ENCODE measurements at regions of chr1 and their contacts with region 1.

Region 1: GRCh38 chr1:156500797-156501499 is 373 bp upstream of the MEF2D start:
- DNase-seq: peak; percentile 90 to 97 (median 94)
- ATAC-seq: peak; percentile 63
- H3K4me3 ChIP-seq: peak overlapping the region; percentile 98
- H3K4me3 Mint-ChIP-seq: peak overlapping the region; percentile 97
- H3K27ac ChIP-seq: peak overlapping the region; percentile 96
- H3K27ac Mint-ChIP-seq: peak overlapping the region; percentile 97
- H3K4me1 ChIP-seq: peaks cover 84% of the 10 kb centered on the region
- H3K4me1 Mint-ChIP-seq: peaks cover 82% of the 10 kb centered on the region
- H3K27me3 ChIP-seq: no peaks in the 10 kb centered on the region
- H3K27me3 Mint-ChIP-seq: no peaks in the 10 kb centered on the region
- CTCF ChIP-seq: peak; percentile 74

Region 2: DNA sequence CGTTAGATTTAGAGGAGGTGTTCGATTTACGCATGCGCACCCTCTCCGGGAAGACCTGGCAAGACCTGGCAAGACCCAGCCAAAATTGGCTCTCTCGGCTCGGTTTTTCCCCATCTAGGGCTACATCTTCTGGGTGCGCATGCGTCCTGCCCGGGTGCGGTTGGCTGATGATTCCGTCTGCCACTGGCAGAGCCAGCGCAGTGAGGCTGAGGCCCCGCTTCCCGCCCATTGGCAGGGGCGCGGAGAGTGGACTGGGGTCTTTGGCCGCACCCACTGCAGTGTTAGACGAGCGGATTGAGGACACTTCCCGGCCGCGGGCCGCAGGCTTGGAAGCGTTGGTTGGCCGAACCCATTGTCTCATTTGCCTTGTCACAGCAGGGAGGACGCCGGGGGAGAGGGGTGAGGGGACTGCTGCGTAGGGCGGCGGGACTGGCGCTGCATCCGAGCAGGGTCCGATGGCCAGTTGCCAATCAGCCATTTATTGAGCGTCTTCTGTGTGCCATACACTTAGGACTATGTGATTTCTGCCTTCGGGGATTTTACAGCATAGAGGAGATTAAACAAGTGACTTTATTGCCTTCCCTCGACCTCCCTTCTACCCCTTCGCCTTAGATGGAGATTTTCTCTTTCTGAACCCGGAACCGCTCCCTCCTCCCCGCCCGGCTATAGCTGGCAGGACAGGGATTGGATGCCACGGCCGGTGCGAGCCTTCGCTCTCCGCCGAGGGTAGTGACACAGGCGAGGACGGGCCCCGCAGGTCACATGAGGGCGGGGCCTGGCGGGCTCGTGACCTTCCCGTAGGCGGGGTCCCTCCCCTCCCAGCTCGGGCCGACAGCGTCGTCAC is 44.1 kb before region 1 on chr1:
- CTCF ChIA-PET with region 1: interaction called, 24 read pairs
- POLR2A ChIA-PET with region 1: interaction called, 121 read pairs
- intact Hi-C with region 1: loop called (anchors 1 kb)
- DNase-seq: peak; percentile 93 to 99 (median 96)
- ATAC-seq: peak; percentile 80
- H3K4me3 ChIP-seq: peak overlapping the region; percentile 56
- H3K4me3 Mint-ChIP-seq: peak overlapping the region; percentile 94
- H3K27ac ChIP-seq: peak overlapping the region; percentile 93 to 100
- H3K27ac Mint-ChIP-seq: peak overlapping the region; percentile 100
- H3K4me1 ChIP-seq: peaks cover 19% of the 10 kb centered on the region
- H3K4me1 Mint-ChIP-seq: peaks cover 25% of the 10 kb centered on the region
- H3K27me3 ChIP-seq: no peaks in the 10 kb centered on the region
- H3K27me3 Mint-ChIP-seq: no peaks in the 10 kb centered on the region
- CTCF ChIP-seq: no peak

Region 3: GRCh38 chr1:156515956-156516355 is 15.0 kb after region 1 on chr1:
- CTCF ChIA-PET with region 1: interaction called, 3 read pairs
- POLR2A ChIA-PET with region 1: interaction called, 10 read pairs
- intact Hi-C with region 1: no loop called
- DNase-seq: no peak
- ATAC-seq: no peak
- H3K4me3 ChIP-seq: no peak overlapping the region
- H3K4me3 Mint-ChIP-seq: no peak overlapping the region
- H3K27ac ChIP-seq: no peak overlapping the region
- H3K27ac Mint-ChIP-seq: no peak overlapping the region
- H3K4me1 ChIP-seq: no peaks in the 10 kb centered on the region
- H3K4me1 Mint-ChIP-seq: peaks cover 8% of the 10 kb centered on the region
- H3K27me3 ChIP-seq: no peaks in the 10 kb centered on the region
- H3K27me3 Mint-ChIP-seq: no peaks in the 10 kb centered on the region
- CTCF ChIP-seq: no peak

Region 4: GRCh38 chr1:156583821-156584622 is 83.1 kb after region 1 on chr1:
- CTCF ChIA-PET with region 1: interaction called, 3 read pairs
- POLR2A ChIA-PET with region 1: interaction called, 49 read pairs
- intact Hi-C with region 1: loop called (anchors 5 kb)
- DNase-seq: peak; percentile 44 to 90 (median 69)
- ATAC-seq: peak; percentile 63
- H3K4me3 ChIP-seq: no peak overlapping the region
- H3K4me3 Mint-ChIP-seq: peak overlapping the region; percentile 63
- H3K27ac ChIP-seq: no peak overlapping the region
- H3K27ac Mint-ChIP-seq: peak overlapping the region; percentile 90
- H3K4me1 ChIP-seq: peaks cover 32% of the 10 kb centered on the region
- H3K4me1 Mint-ChIP-seq: peaks cover 33% of the 10 kb centered on the region
- H3K27me3 ChIP-seq: no peaks in the 10 kb centered on the region
- H3K27me3 Mint-ChIP-seq: no peaks in the 10 kb centered on the region
- CTCF ChIP-seq: peak; percentile 85

Region 5: GRCh38 chr1:156728597-156729462 is 227.9 kb after region 1 on chr1 and contains the start of gene ISG20L2:
- CTCF ChIA-PET with region 1: no interaction called
- POLR2A ChIA-PET with region 1: interaction called, 6 read pairs
- intact Hi-C with region 1: loop called in 1 of 2 experiments (anchors 10 kb)
- DNase-seq: peak; percentile 80 to 99 (median 90)
- ATAC-seq: peak; percentile 90
- H3K4me3 ChIP-seq: peak within 1 kb of the TSS; percentile 99
- H3K4me3 Mint-ChIP-seq: no peak within 1 kb of the TSS
- H3K27ac ChIP-seq: peak within 1 kb of the TSS; percentile 90 to 98
- H3K27ac Mint-ChIP-seq: peak within 1 kb of the TSS; percentile 98
- H3K4me1 ChIP-seq: peaks cover 48% of the 10 kb centered on the region
- H3K4me1 Mint-ChIP-seq: peaks cover 23% of the 10 kb centered on the region
- H3K27me3 ChIP-seq: no peaks in the 10 kb centered on the region
- H3K27me3 Mint-ChIP-seq: no peaks in the 10 kb centered on the region
- CTCF ChIP-seq: no peak
- total RNA-seq, gene ISG20L2: 44.2 to 50.9 TPM

Region 6: DNA sequence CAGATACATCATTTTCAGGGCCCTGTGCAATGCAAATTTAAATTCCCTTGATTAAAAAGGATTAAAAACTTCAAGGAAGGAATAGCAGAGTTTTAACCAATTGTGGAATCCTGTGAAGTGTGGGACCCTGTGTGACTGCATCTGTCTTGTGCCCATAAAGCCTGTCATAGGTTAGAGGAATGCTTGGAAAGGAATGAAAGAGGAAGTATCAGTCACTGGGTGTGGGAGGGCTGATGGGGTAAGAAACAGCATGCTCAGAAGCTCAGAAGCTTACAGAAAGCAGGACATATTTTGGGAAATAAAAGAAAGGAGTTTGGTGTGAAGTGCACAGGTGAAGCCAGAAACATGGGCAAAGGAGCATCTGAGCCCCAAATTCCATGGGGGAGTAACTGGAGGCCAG is 788.0 kb after region 1 on chr1:
- CTCF ChIA-PET with region 1: no interaction called
- POLR2A ChIA-PET with region 1: no interaction called
- intact Hi-C with region 1: no loop called
- DNase-seq: no peak
- ATAC-seq: no peak
- H3K4me3 ChIP-seq: no peak overlapping the region
- H3K4me3 Mint-ChIP-seq: no peak overlapping the region
- H3K27ac ChIP-seq: no peak overlapping the region
- H3K27ac Mint-ChIP-seq: no peak overlapping the region
- H3K4me1 ChIP-seq: no peaks in the 10 kb centered on the region
- H3K4me1 Mint-ChIP-seq: no peaks in the 10 kb centered on the region
- H3K27me3 ChIP-seq: peaks cover 11 to 25% of the 10 kb centered on the region in 2 experiments
- H3K27me3 Mint-ChIP-seq: peaks cover 57% of the 10 kb centered on the region
- CTCF ChIP-seq: no peak

Measured in CD4-positive, alpha-beta T cell (primary cell).